H1 (cell line): ENCODE measurements at regions of chr7 and their contacts with region 1.

Region 1: GRCh38 chr7:154913638-154914312 is 89.1 kb downstream of the PAXIP1 start:
- DNase-seq: peak; percentile 79 to 99
- H3K4me3 ChIP-seq: peak overlapping the region in 3 of 4 experiments; percentile 22 to 48 (median 40); a peak in 4 of 8 replicates
- H3K27ac ChIP-seq: no peak overlapping the region
- H3K4me1 ChIP-seq: peaks cover 0 to 2% (median 0%) of the 10 kb centered on the region in 4 experiments; a peak in 4 of 7 replicates
- H3K27me3 ChIP-seq: peaks cover 0 to 9% (median 7%) of the 10 kb centered on the region in 4 experiments; a peak in 5 of 7 replicates
- CTCF ChIP-seq: peak; percentile 75 to 93 (median 89)
- EP300 ChIP-seq: no peak
- POLR2A ChIP-seq: no peak
- RAD21 ChIP-seq: peak; percentile 88 to 95

Region 2: GRCh38 chr7:154832557-154833138 is 81.1 kb before region 1 on chr7:
- CTCF ChIA-PET with region 1: interaction called, 20 read pairs
- POLR2A ChIA-PET with region 1: no interaction called
- DNase-seq: peak in 1 of 2 experiments; percentile 54
- H3K4me3 ChIP-seq: no peak overlapping the region
- H3K27ac ChIP-seq: no peak overlapping the region
- H3K4me1 ChIP-seq: no peaks in the 10 kb centered on the region
- H3K27me3 ChIP-seq: no peaks in the 10 kb centered on the region
- CTCF ChIP-seq: peak; percentile 57 to 68 (median 61)
- EP300 ChIP-seq: no peak
- POLR2A ChIP-seq: no peak
- RAD21 ChIP-seq: peak; percentile 80 to 86

Region 3: DNA sequence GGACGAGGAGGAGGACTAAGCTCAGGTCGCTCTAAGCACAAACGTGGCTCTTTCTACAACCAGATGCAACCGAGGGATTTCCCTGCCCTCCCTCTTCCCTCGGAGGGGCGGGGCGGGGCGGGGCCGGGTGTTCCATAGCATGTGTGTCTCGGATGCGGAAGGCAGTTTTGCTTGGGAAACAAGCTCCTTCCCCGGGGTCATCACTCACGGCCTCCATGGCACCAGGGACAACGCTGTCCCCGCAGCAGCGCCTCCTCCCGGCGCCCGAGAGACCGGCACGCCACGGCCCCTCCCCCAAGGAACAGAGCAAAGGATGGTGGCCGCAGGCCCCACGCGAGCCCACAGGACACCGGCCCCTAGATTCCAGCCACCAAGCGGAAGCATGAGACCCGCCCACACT is 21.3 kb before region 1 on chr7:
- CTCF ChIA-PET with region 1: interaction called, 34 read pairs
- POLR2A ChIA-PET with region 1: no interaction called
- DNase-seq: peak in 1 of 2 experiments; percentile 76
- H3K4me3 ChIP-seq: no peak overlapping the region
- H3K27ac ChIP-seq: no peak overlapping the region
- H3K4me1 ChIP-seq: peaks cover 0 to 2% (median 0%) of the 10 kb centered on the region in 4 experiments; a peak in 2 of 7 replicates
- H3K27me3 ChIP-seq: no peaks in the 10 kb centered on the region
- CTCF ChIP-seq: peak; percentile 37 to 52 (median 51)
- EP300 ChIP-seq: no peak
- POLR2A ChIP-seq: no peak
- RAD21 ChIP-seq: peak in 1 of 2 experiments; percentile 26; a peak in 1 of 4 replicates

Region 4: GRCh38 chr7:154927624-154928143 is 13.9 kb after region 1 on chr7:
- CTCF ChIA-PET with region 1: interaction called, 58 read pairs
- POLR2A ChIA-PET with region 1: interaction called, 3 read pairs
- DNase-seq: peak in 1 of 2 experiments; percentile 69
- H3K4me3 ChIP-seq: no peak overlapping the region
- H3K27ac ChIP-seq: no peak overlapping the region
- H3K4me1 ChIP-seq: peaks cover 0 to 6% (median 4%) of the 10 kb centered on the region in 4 experiments; a peak in 5 of 7 replicates
- H3K27me3 ChIP-seq: no peaks in the 10 kb centered on the region
- CTCF ChIP-seq: peak in 2 of 3 experiments; percentile 46 to 60; a peak in 3 of 4 replicates
- EP300 ChIP-seq: no peak
- POLR2A ChIP-seq: no peak
- RAD21 ChIP-seq: peak; percentile 81 to 87

Region 5: DNA sequence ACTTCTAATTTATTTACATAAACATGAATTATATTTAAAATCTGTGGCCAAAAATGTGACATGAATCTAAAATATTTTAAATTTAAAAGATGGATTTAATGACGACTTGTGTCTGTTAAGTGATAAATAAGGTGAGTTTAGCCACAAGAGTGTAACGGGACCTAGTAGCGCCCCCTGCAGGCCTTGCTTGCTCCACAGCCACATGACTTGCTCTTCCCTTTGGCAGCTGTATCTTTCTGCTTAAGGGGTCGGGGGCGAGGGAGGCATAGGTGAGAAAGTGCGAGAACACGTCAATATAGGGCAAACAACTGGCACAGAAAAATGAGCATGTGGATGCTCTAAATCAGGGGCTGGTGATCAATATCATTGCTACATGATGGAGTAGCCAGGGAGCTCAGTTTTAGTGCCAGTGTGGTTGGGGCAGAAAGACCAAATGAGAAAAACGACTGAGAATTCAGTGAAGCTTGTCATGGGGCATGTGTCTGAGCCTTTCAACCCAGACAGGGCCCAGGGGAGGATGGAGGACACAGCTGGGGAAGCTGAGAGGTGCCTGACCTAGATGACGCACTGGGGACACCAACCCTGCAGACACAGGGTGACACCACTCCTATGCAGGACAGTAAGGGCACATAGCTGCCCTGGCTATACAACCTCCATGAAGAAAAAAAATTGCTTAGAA is 39.4 kb after region 1 on chr7:
- CTCF ChIA-PET with region 1: interaction called, 38 read pairs
- POLR2A ChIA-PET with region 1: no interaction called
- DNase-seq: peak; percentile 71 to 90
- H3K4me3 ChIP-seq: no peak overlapping the region
- H3K27ac ChIP-seq: no peak overlapping the region; the same call in 1 of the 2 replicates
- H3K4me1 ChIP-seq: no peaks in the 10 kb centered on the region
- H3K27me3 ChIP-seq: no peaks in the 10 kb centered on the region
- CTCF ChIP-seq: peak; percentile 81 to 89 (median 83)
- EP300 ChIP-seq: no peak
- POLR2A ChIP-seq: no peak
- RAD21 ChIP-seq: peak; percentile 55 to 65

Region 6: GRCh38 chr7:155190688-155191087 is 276.9 kb after region 1 on chr7:
- CTCF ChIA-PET with region 1: interaction called, 12 read pairs
- POLR2A ChIA-PET with region 1: no interaction called
- DNase-seq: peak in 1 of 2 experiments; percentile 95
- H3K4me3 ChIP-seq: peak overlapping the region in 1 of 4 experiments; percentile 33; a peak in 1 of 8 replicates
- H3K27ac ChIP-seq: no peak overlapping the region
- H3K4me1 ChIP-seq: no peaks in the 10 kb centered on the region; a peak in 1 of 7 replicates
- H3K27me3 ChIP-seq: peaks cover 0 to 3% (median 0%) of the 10 kb centered on the region in 4 experiments; a peak in 1 of 7 replicates
- CTCF ChIP-seq: peak; percentile 73 to 86 (median 85)
- EP300 ChIP-seq: no peak
- POLR2A ChIP-seq: no peak
- RAD21 ChIP-seq: peak; percentile 79 to 93

Region 7: DNA sequence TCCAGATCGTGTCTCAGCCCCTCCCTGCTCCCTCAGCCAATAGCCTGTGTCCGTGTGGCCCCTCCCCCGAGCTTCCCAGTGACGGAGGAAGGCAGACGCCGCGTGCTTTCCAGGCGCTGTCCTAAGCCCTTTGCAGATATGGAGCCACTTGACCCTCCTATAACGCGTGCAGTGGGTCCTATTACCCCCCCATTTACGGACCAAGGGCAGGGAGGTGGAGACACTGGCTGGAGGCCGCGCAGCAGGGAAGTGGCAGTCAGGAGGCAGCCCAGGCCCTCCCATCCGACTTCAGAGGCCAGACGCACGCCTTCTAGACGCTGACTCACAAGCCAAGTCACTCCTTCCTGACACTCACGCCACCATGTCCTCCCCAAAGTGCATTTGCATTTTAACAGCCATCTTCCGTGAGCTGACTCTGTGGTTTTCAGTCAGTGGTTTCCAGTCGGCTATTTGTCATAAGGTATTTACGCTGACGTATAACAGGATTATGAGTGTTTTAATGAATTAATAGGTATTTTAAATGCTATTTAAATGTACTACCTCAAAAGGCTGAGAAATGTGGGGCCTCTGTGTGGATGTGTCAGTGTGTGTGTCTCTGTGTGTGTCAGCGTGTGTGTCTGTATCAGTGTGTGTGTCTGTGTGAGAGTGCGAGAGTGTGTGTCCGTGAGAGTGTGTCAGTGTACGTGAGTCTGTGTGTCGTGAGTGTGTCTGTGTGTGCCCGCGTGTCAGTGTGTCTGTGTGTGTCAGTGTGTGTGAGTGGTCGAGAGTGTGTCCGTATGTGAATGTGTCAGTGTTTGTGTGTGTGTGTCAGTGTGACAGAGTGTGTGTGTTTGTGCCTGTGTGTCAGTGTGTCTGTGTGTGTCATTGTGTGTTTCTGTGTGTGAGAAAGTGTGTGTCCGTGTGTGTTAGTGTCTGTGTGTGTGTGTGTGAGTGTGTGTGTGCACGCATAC is 291.9 kb after region 1 on chr7:
- CTCF ChIA-PET with region 1: no interaction called
- POLR2A ChIA-PET with region 1: no interaction called
- DNase-seq: peak in 1 of 2 experiments; percentile 55
- H3K4me3 ChIP-seq: no peak overlapping the region
- H3K27ac ChIP-seq: no peak overlapping the region
- H3K4me1 ChIP-seq: peaks cover 0 to 20% (median 8%) of the 10 kb centered on the region in 4 experiments; a peak in 4 of 7 replicates
- H3K27me3 ChIP-seq: no peaks in the 10 kb centered on the region
- CTCF ChIP-seq: no peak
- EP300 ChIP-seq: no peak
- POLR2A ChIP-seq: no peak
- RAD21 ChIP-seq: no peak